ENCODE measurements at regions of chr12 and their contacts with region 1.

Region 1: DNA sequence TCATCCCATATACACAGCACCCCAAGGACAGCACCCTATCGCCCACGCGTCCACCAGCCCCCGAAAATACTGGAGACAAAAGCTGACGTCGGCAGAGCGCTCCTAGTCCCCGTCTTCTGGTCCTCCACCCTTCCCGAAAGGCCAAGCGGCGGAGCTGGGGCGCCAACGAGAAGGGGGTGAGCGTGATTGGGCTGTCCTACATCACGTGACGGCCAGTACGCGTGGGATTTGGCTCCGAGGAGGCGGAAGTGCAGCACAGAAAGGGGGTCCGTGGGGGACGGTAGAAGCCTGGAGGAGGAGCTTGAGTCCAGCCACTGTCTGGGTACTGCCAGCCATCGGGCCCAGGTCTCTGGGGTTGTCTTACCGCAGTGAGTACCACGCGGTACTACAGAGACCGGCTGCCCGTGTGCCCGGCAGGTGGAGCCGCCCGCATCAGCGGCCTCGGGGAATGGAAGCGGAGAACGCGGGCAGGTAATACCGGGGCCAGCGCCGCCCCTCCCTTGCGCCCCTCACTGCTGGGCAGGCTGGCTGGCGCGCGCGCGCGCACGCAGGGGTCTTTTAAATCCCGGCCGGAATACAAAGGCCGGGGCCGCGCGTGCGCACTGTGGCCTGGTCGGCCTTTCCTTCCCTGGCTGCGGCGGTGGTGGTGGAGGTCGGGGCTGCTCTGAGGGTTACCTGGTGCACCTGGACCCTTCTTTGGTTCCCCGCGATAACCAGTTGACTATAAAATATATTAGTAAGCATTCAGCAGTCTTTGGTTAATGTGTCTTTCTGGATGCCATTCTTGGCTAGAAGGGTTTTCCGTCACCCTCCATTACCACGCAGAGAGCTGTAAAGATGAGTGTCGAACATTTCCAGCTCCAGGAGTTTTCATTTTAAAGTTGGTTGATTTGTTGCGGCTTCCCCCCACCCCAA is at the start of gene TDG:
- DNase-seq: peak; percentile 98
- ATAC-seq: peak; percentile 94
- H3K4me3 ChIP-seq: peak within 1 kb of the TSS; percentile 70 to 96 (median 85)
- H3K4me3 Mint-ChIP-seq: peak within 1 kb of the TSS; percentile 98
- H3K27ac ChIP-seq: peak within 1 kb of the TSS; percentile 81 to 95
- H3K27ac Mint-ChIP-seq: peak within 1 kb of the TSS; percentile 97
- H3K4me1 ChIP-seq: peaks cover 26% of the 10 kb centered on the region in 2 donors
- H3K4me1 Mint-ChIP-seq: peaks cover 41% of the 10 kb centered on the region
- H3K27me3 ChIP-seq: no peaks in the 10 kb centered on the region
- H3K27me3 Mint-ChIP-seq: no peaks in the 10 kb centered on the region
- CTCF ChIP-seq: peak; percentile 26
- total RNA-seq, gene TDG: 35.5 and 40.5 TPM in 2 replicates

Region 2: GRCh38 chr12:103840876-103841689 is 124.8 kb before region 1 on chr12 and contains the start of gene NT5DC3:
- CTCF ChIA-PET with region 1: no interaction called
- POLR2A ChIA-PET with region 1: interaction called, 7 read pairs
- intact Hi-C with region 1: loop called (anchors 2 kb)
- DNase-seq: peak; percentile 92
- ATAC-seq: peak; percentile 91
- H3K4me3 ChIP-seq: peak within 1 kb of the TSS in 4 of 5 experiments; percentile 50 to 86 (median 76)
- H3K4me3 Mint-ChIP-seq: peak within 1 kb of the TSS; percentile 89
- H3K27ac ChIP-seq: no peak within 1 kb of the TSS
- H3K27ac Mint-ChIP-seq: peak within 1 kb of the TSS; percentile 88
- H3K4me1 ChIP-seq: peaks cover 14 to 22% of the 10 kb centered on the region in 2 donors
- H3K4me1 Mint-ChIP-seq: peaks cover 27% of the 10 kb centered on the region
- H3K27me3 ChIP-seq: no peaks in the 10 kb centered on the region
- H3K27me3 Mint-ChIP-seq: no peaks in the 10 kb centered on the region
- CTCF ChIP-seq: no peak
- total RNA-seq, gene NT5DC3: 10.6 and 14.7 TPM in 2 replicates

Region 3: DNA sequence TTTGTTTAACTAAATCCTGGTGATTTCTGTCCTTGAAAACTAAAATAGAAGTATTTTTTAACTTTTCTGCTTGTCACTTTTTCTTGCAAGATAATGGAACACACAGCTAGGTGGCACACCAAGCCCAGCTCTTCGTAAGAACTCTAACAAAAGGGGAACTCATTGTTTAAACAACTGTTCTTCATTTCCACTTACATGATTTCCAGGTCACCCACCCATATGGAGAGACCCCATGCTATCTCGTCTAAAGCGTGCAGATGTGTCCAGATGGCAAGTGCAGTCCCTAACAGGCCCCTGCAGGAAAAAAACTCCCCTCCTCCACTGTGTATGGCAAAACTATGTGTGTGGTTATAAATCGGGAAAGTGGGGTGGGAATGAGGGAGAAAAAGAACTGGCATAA is 81.5 kb before region 1 on chr12:
- CTCF ChIA-PET with region 1: interaction called, 3 read pairs
- POLR2A ChIA-PET with region 1: interaction called, 3 read pairs
- intact Hi-C with region 1: loop called (anchors 5 kb)
- DNase-seq: peak; percentile 55
- ATAC-seq: peak; percentile 56
- H3K4me3 ChIP-seq: no peak overlapping the region
- H3K4me3 Mint-ChIP-seq: no peak overlapping the region
- H3K27ac ChIP-seq: no peak overlapping the region
- H3K27ac Mint-ChIP-seq: no peak overlapping the region
- H3K4me1 ChIP-seq: peaks cover 11 to 15% of the 10 kb centered on the region in 2 donors
- H3K4me1 Mint-ChIP-seq: peaks cover 22% of the 10 kb centered on the region
- H3K27me3 ChIP-seq: no peaks in the 10 kb centered on the region
- H3K27me3 Mint-ChIP-seq: no peaks in the 10 kb centered on the region
- CTCF ChIP-seq: peak; percentile 65

Region 4: DNA sequence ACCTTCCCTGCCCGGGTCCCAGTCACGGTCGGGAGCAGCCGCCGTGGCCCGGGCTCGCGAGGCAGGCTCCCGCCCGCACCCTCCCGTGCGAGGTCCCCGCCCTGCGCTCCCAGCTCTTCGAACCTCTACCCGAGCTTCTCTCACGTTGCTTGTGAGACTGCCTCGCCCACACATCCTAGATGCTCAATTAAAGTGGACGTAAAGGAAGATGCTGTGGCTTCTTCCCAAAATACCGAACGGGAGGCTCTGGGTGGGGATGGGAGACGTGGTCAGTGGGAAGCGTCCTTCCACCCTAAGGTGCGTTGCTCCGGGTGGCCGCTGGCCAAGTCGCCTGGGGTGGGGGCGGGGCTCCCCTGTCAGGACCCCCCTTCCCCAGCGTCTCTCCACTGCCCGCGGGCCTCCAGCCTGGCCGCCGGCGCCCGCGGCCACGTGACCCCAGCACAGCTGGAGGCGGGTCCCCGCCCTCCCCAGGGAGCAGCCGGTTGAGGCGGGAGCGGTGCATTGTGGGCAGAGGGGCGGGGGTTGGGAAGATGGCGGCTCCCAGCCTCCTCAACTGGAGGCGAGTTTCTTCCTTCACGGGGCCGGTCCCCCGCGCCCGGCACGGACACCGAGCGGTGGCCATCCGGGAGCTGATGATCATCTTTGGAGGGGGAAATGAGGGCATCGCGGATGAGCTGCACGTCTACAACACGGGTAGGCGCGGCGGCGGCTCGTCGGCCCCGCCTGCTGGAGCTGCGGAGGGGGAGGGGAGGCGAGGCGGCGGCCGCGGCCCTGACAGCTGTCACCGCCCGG is 98.4 kb after region 1 on chr12 and contains the start of gene HCFC2:
- CTCF ChIA-PET with region 1: no interaction called
- POLR2A ChIA-PET with region 1: interaction called, 3 read pairs
- intact Hi-C with region 1: loop called (anchors 1 kb)
- DNase-seq: peak; percentile 94
- ATAC-seq: peak; percentile 92
- H3K4me3 ChIP-seq: peak within 1 kb of the TSS; percentile 80 to 95 (median 85)
- H3K4me3 Mint-ChIP-seq: peak within 1 kb of the TSS; percentile 94
- H3K27ac ChIP-seq: peak within 1 kb of the TSS; percentile 36 to 79
- H3K27ac Mint-ChIP-seq: peak within 1 kb of the TSS; percentile 93
- H3K4me1 ChIP-seq: peaks cover 10 to 14% of the 10 kb centered on the region in 2 donors
- H3K4me1 Mint-ChIP-seq: peaks cover 17% of the 10 kb centered on the region
- H3K27me3 ChIP-seq: no peaks in the 10 kb centered on the region
- H3K27me3 Mint-ChIP-seq: peaks cover 9% of the 10 kb centered on the region
- CTCF ChIP-seq: no peak
- total RNA-seq, gene HCFC2: 10.5 and 11.6 TPM in 2 replicates

Region 5: DNA sequence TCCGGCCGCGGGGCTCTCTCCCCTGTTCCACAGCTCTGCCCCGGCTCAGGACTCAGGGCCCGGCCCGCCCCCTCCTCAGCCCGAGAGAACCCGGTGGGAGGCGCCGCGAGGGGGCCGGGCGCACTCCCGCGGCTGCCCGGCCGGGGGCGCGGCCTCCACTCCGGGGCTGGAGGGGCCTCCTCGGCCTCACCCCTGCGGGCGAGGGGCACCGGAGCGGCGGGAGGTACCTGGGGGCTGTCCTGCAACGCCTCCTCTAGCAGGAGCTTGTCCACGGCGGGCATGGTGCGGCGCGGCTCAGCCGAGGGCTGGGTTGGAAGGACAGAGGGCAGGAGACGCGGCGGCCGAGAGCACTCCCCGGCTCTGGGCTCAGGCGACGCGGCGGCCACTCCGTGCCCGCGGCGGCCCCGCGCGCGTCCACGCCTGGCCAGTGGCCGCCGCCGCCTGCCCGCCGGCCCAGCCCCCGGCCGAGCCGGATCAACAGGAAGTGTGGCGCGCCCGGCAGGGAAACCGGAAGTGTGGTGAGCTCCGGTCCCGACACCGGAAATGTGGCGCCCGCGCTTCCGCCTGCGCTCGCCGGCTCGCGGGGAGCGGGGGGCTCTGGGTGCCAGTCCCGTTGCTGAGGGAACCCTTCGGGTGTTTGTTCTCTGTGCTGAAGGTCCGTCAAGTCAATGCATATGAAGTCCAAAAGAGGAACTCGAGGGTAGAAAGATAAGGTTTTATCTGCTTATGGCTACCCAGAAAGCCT is 1270.1 kb after region 1 on chr12 and contains the start of gene APPL2:
- CTCF ChIA-PET with region 1: no interaction called
- POLR2A ChIA-PET with region 1: no interaction called
- intact Hi-C with region 1: loop called (anchors 5 kb)
- DNase-seq: peak; percentile 92
- ATAC-seq: peak; percentile 81
- H3K4me3 ChIP-seq: peak within 1 kb of the TSS; percentile 51 to 90 (median 71)
- H3K4me3 Mint-ChIP-seq: peak within 1 kb of the TSS; percentile 95
- H3K27ac ChIP-seq: peak within 1 kb of the TSS; percentile 70 to 95
- H3K27ac Mint-ChIP-seq: peak within 1 kb of the TSS; percentile 94
- H3K4me1 ChIP-seq: peaks cover 44 to 49% of the 10 kb centered on the region in 2 donors
- H3K4me1 Mint-ChIP-seq: peaks cover 38% of the 10 kb centered on the region
- H3K27me3 ChIP-seq: no peaks in the 10 kb centered on the region
- H3K27me3 Mint-ChIP-seq: no peaks in the 10 kb centered on the region
- CTCF ChIP-seq: peak; percentile 66
- total RNA-seq, gene APPL2: 57.7 and 58.3 TPM in 2 replicates